ENCODE measurements at regions of chr12 and their contacts with region 1.

Region 1: GRCh38 chr12:96140174-96140573 is 54.0 kb upstream of the ELK3 start:
- DNase-seq: no peak
- H3K4me3 ChIP-seq: no peak overlapping the region
- H3K27ac ChIP-seq: no peak overlapping the region
- H3K4me1 ChIP-seq: peaks cover 63% of the 10 kb centered on the region
- H3K27me3 ChIP-seq: no peaks in the 10 kb centered on the region
- CTCF ChIP-seq: no peak
- POLR2A ChIP-seq: no peak

Region 2: DNA sequence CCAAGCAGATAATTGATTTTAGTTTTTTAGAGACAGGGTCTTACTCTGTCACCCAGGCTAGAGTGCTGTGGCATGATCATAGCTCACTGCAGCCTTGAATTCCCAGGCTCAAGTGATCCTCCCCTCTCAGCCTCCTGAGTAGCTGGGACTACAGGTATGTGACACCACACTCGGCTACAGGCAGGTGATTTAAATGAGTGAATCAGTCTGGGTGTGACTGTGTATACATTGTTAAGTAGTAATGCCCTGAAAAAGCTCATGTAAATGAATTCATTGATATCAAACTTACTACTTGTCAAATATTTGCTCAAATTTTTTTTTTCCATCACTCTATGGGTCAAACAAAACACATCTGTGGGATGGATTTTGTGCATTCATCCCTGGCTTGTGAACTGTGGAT is 582.5 kb before region 1 on chr12:
- CTCF ChIA-PET with region 1: no interaction called
- POLR2A ChIA-PET with region 1: no interaction called
- dilution Hi-C with region 1: no loop called
- intact Hi-C with region 1: no loop called
- DNase-seq: no peak
- H3K4me3 ChIP-seq: no peak overlapping the region
- H3K27ac ChIP-seq: no peak overlapping the region
- H3K4me1 ChIP-seq: no peaks in the 10 kb centered on the region
- H3K27me3 ChIP-seq: peaks cover 0 to 2% of the 10 kb centered on the region in 2 experiments
- CTCF ChIP-seq: no peak
- POLR2A ChIP-seq: no peak

Region 3: DNA sequence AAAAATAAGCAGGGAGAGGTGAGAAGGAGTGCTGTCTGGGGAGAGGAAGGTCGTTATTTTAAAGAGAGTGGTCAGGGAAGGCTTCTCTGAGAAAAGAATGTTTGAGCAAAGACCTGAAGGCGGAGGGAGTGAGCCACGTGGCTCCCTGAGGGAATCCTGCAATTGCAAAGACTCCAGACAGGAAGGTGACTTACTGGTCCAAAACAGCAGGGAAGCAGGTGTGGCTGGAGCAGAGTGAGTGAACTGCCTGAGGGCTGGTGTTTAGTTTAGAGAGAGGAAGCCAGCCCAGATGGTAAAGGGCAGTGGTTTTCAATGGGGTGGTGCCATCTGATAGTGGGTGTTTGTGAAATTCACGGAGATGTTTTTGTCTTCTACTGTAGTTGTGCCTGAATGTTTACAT is 46.0 kb before region 1 on chr12:
- CTCF ChIA-PET with region 1: no interaction called
- POLR2A ChIA-PET with region 1: no interaction called
- dilution Hi-C with region 1: no loop called
- intact Hi-C with region 1: loop called (anchors 2 kb)
- DNase-seq: peak; percentile 93
- H3K4me3 ChIP-seq: no peak overlapping the region
- H3K27ac ChIP-seq: peak overlapping the region; percentile 26
- H3K4me1 ChIP-seq: peaks cover 20% of the 10 kb centered on the region
- H3K27me3 ChIP-seq: no peaks in the 10 kb centered on the region
- CTCF ChIP-seq: no peak
- POLR2A ChIP-seq: no peak

Region 4: GRCh38 chr12:96108321-96108720 is 31.9 kb before region 1 on chr12:
- CTCF ChIA-PET with region 1: interaction called, 3 read pairs
- POLR2A ChIA-PET with region 1: no interaction called
- dilution Hi-C with region 1: no loop called
- intact Hi-C with region 1: loop called (anchors 2 kb)
- DNase-seq: peak; percentile 82
- H3K4me3 ChIP-seq: no peak overlapping the region
- H3K27ac ChIP-seq: peak overlapping the region; percentile 90
- H3K4me1 ChIP-seq: peaks cover 25% of the 10 kb centered on the region
- H3K27me3 ChIP-seq: no peaks in the 10 kb centered on the region
- CTCF ChIP-seq: no peak
- POLR2A ChIP-seq: peak; percentile 43

Region 5: GRCh38 chr12:96258104-96258961 is 118.2 kb after region 1 on chr12:
- CTCF ChIA-PET with region 1: no interaction called
- POLR2A ChIA-PET with region 1: no interaction called
- dilution Hi-C with region 1: no loop called
- intact Hi-C with region 1: loop called (anchors 5 kb)
- DNase-seq: peak; percentile 70
- H3K4me3 ChIP-seq: no peak overlapping the region
- H3K27ac ChIP-seq: peak overlapping the region; percentile 41
- H3K4me1 ChIP-seq: peaks cover 80% of the 10 kb centered on the region
- H3K27me3 ChIP-seq: no peaks in the 10 kb centered on the region
- CTCF ChIP-seq: no peak
- POLR2A ChIP-seq: no peak

Measured in endothelial cell of umbilical vein (primary cell).